ENCODE measurements at regions of chr20 and their contacts with region 1.

Region 1: GRCh38 chr20:57514273-57514751 is 10.6 kb downstream of the CTCFL start:
- DNase-seq: peak; percentile 90
- H3K4me3 ChIP-seq: no peak overlapping the region
- H3K27ac ChIP-seq: no peak overlapping the region
- H3K4me1 ChIP-seq: peaks cover 0 to 9% (median 0%) of the 10 kb centered on the region in 4 donors
- H3K27me3 ChIP-seq: no peaks in the 10 kb centered on the region
- CTCF ChIP-seq: peak; percentile 58 to 89 (median 75)
- EP300 ChIP-seq: no peak
- POLR2A ChIP-seq: no peak

Region 2: GRCh38 chr20:57596998-57597939 is 83.0 kb after region 1 on chr20:
- intact Hi-C with region 1: loop called (anchors 1 kb)
- DNase-seq: peak; percentile 79
- H3K4me3 ChIP-seq: peak overlapping the region in 1 of 4 donors; percentile 20
- H3K27ac ChIP-seq: no peak overlapping the region
- H3K4me1 ChIP-seq: peaks cover 0 to 12% (median 8%) of the 10 kb centered on the region in 4 donors
- H3K27me3 ChIP-seq: peaks cover 0 to 7% (median 0%) of the 10 kb centered on the region in 3 donors
- CTCF ChIP-seq: peak; percentile 88 to 99 (median 91)
- EP300 ChIP-seq: no peak
- POLR2A ChIP-seq: no peak

Region 3: DNA sequence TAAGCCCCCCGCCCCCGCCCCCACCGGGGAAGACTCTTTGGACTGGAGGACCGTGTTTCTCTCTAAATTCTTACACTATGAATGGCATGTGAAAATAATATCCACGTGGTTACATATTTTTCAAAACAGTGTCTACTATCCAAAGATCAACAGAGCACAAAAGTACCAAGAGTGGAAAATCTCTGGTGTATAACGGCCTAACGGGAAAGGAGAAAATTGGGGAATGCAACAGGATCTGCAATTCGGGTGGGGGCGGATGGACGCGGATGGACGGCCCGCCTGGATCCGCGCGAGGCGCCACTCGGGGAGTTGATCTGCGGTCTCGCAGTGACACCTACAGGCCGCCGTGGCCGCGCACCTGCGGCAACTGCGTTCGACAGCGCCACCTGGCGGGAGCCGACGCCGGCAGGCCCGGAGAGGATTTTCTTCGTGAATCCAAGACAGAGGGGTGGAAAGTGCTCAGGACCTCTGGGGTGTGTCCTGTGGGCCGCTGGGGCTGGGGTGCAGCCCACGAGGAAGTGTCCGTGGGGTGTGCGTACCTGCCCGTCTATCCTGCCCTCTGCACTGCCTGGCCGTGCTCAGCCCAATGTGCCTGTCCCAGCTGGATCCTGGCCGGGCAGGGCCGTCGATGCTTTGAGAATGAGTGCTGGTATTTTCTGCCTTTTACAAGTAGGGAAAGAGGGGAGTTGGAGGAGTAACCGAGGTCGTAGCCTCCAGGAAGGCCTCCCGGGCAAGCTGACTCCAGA is 695.5 kb after region 1 on chr20:
- intact Hi-C with region 1: loop called (anchors 2 kb)
- DNase-seq: peak; percentile 91
- H3K4me3 ChIP-seq: no peak overlapping the region
- H3K27ac ChIP-seq: no peak overlapping the region
- H3K4me1 ChIP-seq: peaks cover 0 to 8% (median 1%) of the 10 kb centered on the region in 4 donors
- H3K27me3 ChIP-seq: peaks cover 0 to 16% (median 8%) of the 10 kb centered on the region in 3 donors
- CTCF ChIP-seq: peak; percentile 99 to 100 (median 100)
- EP300 ChIP-seq: no peak
- POLR2A ChIP-seq: no peak